ENCODE measurements at regions of chr15 and their contacts with region 1.

Region 1: DNA sequence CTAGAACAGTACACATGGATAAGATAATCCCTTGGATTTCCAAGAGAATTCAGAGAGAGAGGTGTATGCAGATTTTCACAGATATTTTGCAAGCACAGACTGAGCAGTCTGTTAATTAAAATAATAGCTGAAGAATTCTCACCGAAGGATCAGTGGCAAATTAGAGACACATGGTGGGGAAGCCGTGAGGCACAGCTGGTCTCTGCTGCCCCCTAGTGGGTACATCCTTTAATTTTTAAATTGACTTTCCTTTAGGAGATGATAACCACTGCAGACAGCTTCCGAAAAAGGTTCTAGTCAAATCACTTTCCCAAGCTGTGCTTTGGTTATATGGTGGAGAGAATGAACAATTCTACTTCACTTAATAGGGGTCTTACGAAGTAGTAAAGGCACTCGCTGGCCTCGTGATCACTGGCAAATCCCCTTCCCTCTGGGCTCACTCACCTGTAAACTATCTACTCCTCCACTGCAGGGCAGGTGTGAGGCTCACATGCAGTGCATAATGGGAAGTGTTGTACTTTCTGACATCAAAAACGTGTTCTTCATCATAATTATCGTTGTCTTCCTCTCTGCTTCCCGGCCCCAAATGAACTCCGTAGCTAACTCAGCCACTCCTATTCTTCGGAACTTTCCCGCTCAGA is 19.5 kb downstream of the MESD start:
- DNase-seq: peak in 1 of 2 donors; percentile 33
- ATAC-seq: peak in 1 of 2 donors; percentile 65
- H3K4me3 ChIP-seq: no peak overlapping the region
- H3K27ac ChIP-seq: no peak overlapping the region
- H3K4me1 ChIP-seq: no peaks in the 10 kb centered on the region
- H3K27me3 ChIP-seq: no peaks in the 10 kb centered on the region
- CTCF ChIP-seq: peak; percentile 72 to 90 (median 80)
- POLR2A ChIP-seq: no peak

Region 2: GRCh38 chr15:80455668-80456442 is 514.3 kb before region 1 on chr15:
- in situ Hi-C with region 1: loop called (anchors 5 to 10 kb)
- intact Hi-C with region 1: loop called (anchors 1 kb)
- DNase-seq: peak; percentile 21 to 24
- ATAC-seq: peak; percentile 33 to 81
- H3K4me3 ChIP-seq: no peak overlapping the region
- H3K27ac ChIP-seq: no peak overlapping the region
- H3K4me1 ChIP-seq: no peaks in the 10 kb centered on the region
- H3K27me3 ChIP-seq: no peaks in the 10 kb centered on the region
- CTCF ChIP-seq: peak; percentile 75 to 95 (median 83)
- POLR2A ChIP-seq: no peak

Region 3: DNA sequence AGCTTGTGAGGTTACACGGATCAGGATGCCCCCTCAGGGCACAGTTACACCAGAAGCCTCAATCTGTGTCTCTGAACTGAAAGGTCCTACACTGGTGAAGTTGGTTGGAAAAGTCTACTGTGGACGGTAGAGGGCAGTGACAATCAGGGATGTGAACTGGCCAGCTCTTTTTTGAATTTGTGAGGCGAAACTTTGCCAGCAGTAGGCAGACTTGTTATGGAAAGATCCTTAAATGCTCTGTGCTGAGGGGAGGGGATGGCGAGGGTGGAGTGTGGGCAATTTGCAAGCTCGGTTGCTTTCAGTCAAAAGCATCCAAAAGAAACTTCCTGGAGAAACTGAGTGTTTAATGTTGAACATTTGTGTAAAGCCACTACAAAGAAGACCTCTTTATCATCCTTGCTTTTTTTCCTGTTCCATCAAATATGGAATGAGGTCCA is 402.4 kb before region 1 on chr15:
- in situ Hi-C with region 1: loop called in 2 of 4 experiments (anchors 25 kb)
- intact Hi-C with region 1: no loop called
- DNase-seq: peak in 1 of 2 donors; percentile 14
- ATAC-seq: peak in 1 of 2 donors; percentile 49
- H3K4me3 ChIP-seq: no peak overlapping the region
- H3K27ac ChIP-seq: no peak overlapping the region
- H3K4me1 ChIP-seq: no peaks in the 10 kb centered on the region
- H3K27me3 ChIP-seq: no peaks in the 10 kb centered on the region
- CTCF ChIP-seq: peak in 4 of 5 experiments; percentile 12 to 47 (median 36)
- POLR2A ChIP-seq: no peak

Region 4: GRCh38 chr15:81011593-81011992 is 41.5 kb after region 1 on chr15:
- in situ Hi-C with region 1: no loop called
- intact Hi-C with region 1: no loop called
- DNase-seq: no peak
- ATAC-seq: no peak
- H3K4me3 ChIP-seq: no peak overlapping the region
- H3K27ac ChIP-seq: no peak overlapping the region
- H3K4me1 ChIP-seq: no peaks in the 10 kb centered on the region
- H3K27me3 ChIP-seq: no peaks in the 10 kb centered on the region
- CTCF ChIP-seq: no peak
- POLR2A ChIP-seq: no peak

Region 5: GRCh38 chr15:81111510-81112470 is 141.7 kb after region 1 on chr15:
- in situ Hi-C with region 1: loop called in 1 of 4 experiments (anchors 10 kb)
- intact Hi-C with region 1: no loop called
- DNase-seq: no peak
- ATAC-seq: no peak
- H3K4me3 ChIP-seq: no peak overlapping the region
- H3K27ac ChIP-seq: no peak overlapping the region
- H3K4me1 ChIP-seq: no peaks in the 10 kb centered on the region
- H3K27me3 ChIP-seq: no peaks in the 10 kb centered on the region
- CTCF ChIP-seq: no peak
- POLR2A ChIP-seq: no peak

Region 6: DNA sequence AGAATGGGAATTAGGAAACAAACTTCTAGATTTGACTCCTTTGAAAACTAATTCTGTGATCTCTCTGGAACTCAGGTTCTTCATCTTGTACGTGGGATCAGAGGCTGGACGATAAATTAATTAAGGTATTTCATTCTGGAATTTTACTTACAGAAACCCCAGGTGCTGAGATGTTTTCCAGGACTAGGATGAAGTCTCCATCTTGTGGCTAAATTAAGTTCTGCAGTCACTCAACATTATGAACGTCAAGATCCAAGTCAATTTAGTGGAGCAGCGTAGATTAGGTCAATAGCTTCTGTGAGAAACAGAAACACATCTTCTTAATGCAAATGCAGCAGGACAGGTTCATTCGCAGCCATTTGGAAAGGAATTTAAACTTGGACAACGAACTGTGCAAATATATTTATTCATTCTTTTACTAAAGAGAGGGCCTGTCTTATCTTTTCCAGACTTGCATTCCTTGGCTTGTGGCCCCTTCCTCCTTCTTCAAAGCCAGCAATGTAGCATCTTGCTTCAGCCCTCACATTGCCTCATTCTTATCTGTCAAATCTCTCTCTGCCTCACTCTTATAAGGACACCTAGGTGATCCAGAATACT is 430.6 kb after region 1 on chr15:
- in situ Hi-C with region 1: no loop called
- intact Hi-C with region 1: loop called (anchors 5 kb)
- DNase-seq: no peak
- ATAC-seq: no peak
- H3K4me3 ChIP-seq: no peak overlapping the region
- H3K27ac ChIP-seq: no peak overlapping the region
- H3K4me1 ChIP-seq: no peaks in the 10 kb centered on the region
- H3K27me3 ChIP-seq: no peaks in the 10 kb centered on the region
- CTCF ChIP-seq: peak; percentile 31 to 62 (median 44)
- POLR2A ChIP-seq: no peak

Measured in gastrocnemius medialis (tissue), 4 donors.